Right cardiac atrium (tissue), 5 donors: ENCODE measurements at regions of chr19 and their contacts with region 1.

Region 1: GRCh38 chr19:54023191-54023590 is 31.8 kb downstream of the CACNG6 start:
- DNase-seq: no peak
- ATAC-seq: no peak
- H3K4me3 ChIP-seq: no peak overlapping the region
- H3K27ac ChIP-seq: no peak overlapping the region
- H3K4me1 ChIP-seq: no peaks in the 10 kb centered on the region
- H3K27me3 ChIP-seq: no peaks in the 10 kb centered on the region

Region 2: DNA sequence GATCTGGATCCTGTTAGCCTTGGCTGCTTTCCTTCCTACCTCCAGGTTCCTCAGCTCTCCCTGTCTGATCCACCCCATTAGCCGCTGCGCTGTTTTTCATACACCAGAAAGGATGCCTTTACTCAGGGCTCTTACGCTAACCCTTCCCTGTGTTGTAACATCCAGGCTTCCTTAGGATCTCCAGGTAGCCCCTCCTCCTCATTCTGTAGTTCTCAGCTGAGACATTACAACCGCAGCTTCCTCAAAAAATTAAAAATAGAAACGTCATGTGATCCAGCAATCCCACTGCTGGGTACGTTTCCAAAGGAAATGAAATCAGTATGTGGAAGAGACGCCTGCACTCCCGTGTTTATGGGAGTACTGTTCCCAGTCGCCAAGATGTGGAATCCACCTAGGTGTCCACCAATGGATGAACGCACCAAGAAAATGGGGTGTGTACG is 173.9 kb before region 1 on chr19:
- intact Hi-C with region 1: loop called (anchors 5 to 10 kb)
- DNase-seq: no peak
- ATAC-seq: peak; percentile 48 to 86
- H3K4me3 ChIP-seq: no peak overlapping the region
- H3K27ac ChIP-seq: peak overlapping the region; percentile 50
- H3K4me1 ChIP-seq: no peaks in the 10 kb centered on the region
- H3K27me3 ChIP-seq: no peaks in the 10 kb centered on the region

Region 3: GRCh38 chr19:53906211-53907192 is 116.7 kb before region 1 on chr19:
- intact Hi-C with region 1: loop called in 3 of 4 experiments (anchors 2 to 10 kb)
- DNase-seq: peak in 2 of 3 donors; percentile 68 to 83
- ATAC-seq: peak in 1 of 2 donors; percentile 64
- H3K4me3 ChIP-seq: no peak overlapping the region
- H3K27ac ChIP-seq: no peak overlapping the region
- H3K4me1 ChIP-seq: no peaks in the 10 kb centered on the region
- H3K27me3 ChIP-seq: no peaks in the 10 kb centered on the region

Region 4: DNA sequence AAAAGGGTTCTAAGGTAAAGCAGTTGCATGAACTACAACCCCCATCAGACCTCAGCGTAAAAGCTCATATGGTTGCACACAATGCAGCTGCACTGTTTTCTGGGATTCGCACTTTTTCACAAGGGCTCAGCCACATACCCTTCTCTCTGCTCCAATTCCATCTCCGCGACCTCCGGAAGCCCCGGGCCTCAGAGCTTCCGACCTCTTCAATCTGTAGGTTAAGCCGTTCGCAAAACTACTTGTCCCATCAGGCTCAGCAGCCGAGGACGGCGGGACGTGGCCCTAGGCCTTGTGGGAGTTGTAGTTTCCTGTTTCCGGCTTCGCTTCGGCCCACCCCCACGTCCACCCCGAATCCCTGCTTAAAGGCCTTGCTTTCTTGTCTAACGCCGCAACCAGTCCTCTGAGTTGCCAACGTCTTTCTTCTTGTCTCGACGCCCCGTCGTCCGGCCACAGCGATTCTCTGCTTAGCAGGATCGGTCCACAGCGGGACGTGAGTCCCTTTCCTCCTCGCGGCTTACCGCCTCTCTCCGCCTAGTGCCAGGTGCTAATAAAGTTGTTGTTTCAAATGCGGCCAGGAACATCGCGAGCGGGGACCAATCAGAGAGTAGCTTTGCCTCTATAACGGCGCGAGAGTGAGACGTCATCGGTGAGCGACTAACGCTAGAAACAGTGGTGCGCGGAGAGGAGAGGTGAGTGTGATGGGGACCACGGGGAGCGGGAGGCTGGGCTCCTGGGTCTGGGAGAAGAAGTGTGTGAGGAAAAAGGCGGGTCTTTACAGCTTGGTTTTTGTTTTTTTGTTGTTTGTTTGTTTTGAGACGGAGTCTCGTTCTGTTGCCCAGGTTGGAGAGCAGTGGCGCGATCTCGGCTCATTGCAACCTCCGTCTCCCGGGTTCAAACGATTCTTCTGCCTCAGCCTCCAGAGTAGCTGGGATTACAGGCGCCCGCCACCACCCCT is 92.2 kb after region 1 on chr19 and contains the starts of genes PRPF31 and TFPT:
- intact Hi-C with region 1: no loop called
- DNase-seq: peak; percentile 97 to 99 (median 97)
- ATAC-seq: peak; percentile 95 to 96
- H3K4me3 ChIP-seq: peak within 1 kb of the TSS; percentile 80
- H3K27ac ChIP-seq: peak within 1 kb of the TSS; percentile 98
- H3K4me1 ChIP-seq: peaks cover 6% of the 10 kb centered on the region
- H3K27me3 ChIP-seq: no peaks in the 10 kb centered on the region
- total RNA-seq, gene PRPF31: 41.9 to 52.1 (median 43.7) TPM
- total RNA-seq, gene TFPT: 15.8 to 17.4 (median 16.8) TPM

Region 5: GRCh38 chr19:54248016-54248601 is 224.9 kb after region 1 on chr19:
- intact Hi-C with region 1: no loop called
- DNase-seq: peak in 1 of 3 donors; percentile 69
- ATAC-seq: peak; percentile 79 to 80
- H3K4me3 ChIP-seq: no peak overlapping the region
- H3K27ac ChIP-seq: peak overlapping the region; percentile 18
- H3K4me1 ChIP-seq: no peaks in the 10 kb centered on the region
- H3K27me3 ChIP-seq: no peaks in the 10 kb centered on the region